ENCODE measurements at regions of chr12 and their contacts with region 1.

Region 1: DNA sequence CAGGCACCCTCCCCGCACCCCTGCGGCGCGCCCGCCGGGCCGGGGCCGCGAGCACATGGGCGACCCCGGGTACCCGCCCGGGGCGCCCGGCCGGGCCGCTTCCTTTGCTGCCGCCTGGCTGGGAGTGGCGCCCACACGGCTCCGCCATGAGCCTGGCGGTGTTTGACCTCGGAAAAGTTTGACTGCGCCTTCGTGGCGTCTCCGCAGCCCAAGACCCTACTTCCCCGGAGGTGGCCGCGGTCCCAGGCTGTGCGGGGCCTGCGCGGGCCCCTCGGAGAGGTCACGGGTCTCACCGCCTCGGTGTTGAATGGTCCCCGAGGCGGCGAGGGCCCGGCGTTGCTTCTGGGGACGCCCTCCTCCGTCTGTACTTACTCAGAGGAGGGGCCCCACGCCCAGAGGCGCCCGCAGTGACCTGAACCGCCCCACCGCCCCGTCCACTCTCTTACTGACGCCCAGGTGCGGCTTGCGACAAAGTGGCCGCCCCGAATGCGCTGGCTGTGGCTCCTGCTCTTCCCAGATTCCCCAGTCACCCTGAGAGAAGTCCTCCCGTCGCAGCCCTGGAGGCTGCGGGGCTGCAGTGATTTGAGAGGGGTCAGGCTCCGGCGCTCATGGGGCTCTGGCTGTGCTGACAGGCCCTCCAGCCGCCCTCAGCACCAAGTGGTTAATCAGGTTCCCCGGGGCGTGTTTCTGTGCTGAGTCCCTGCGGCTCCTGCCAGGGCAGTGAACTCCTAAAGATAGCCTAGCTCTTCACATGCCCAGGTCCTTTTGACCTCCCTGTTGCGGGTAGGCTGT is 5.8 kb downstream of the KMT5A start:
- DNase-seq: peak; percentile 65 to 83
- ATAC-seq: peak; percentile 59
- H3K4me3 ChIP-seq: peak overlapping the region; percentile 96 to 97
- H3K27ac ChIP-seq: peak overlapping the region; percentile 49 to 94
- H3K4me1 ChIP-seq: no peaks in the 10 kb centered on the region
- H3K27me3 ChIP-seq: no peaks in the 10 kb centered on the region

Region 2: DNA sequence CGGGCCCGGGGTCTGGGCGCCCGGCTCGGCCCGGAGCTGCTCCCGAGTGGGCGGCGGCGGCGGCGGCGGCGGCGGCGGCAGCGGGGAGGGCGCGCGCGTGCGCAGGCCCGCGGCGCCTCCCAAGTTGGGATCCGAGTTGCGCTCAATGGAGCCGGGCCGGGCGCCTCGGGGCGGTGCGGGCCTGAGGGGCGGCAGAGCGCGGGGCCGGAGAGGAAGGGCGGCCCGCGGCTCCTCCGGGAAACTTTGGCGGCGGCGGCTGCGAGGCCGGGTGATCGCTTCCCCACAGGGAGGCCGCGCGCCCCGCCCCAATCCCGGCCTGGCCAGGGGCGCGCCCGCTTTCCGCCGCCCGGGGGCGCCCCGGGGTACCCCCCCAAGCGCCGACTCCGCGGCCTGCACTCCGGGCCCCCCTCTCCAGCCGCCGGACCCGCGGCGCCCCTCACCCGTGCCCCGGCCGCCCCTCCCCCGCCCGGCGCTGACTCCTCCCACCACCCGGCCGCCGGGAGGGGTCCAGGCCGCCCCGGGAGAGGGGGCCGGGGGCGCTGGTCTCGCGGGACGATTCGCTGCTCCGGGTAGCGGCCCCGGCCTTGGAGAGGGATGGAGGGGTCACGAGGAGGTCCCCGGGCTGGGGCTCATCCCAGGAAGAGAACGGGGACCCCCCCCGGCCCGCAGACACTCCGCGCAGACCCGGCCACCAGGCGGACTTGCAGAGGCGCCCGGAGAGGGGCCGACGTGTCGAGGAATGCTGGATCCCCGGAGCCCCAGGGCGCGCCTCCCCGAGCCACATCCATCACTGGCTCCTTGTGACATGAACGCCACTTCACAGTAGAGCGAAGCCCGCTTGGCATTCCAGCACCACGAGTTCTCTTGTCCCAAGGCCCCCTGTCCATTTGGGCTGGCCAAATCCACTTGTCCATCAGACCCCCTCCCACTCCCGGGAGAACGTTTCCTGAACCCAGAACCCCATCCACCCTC is 144.2 kb after region 1 on chr12 and contains the start of gene RILPL1:
- intact Hi-C with region 1: loop called in 1 of 2 experiments (anchors 5 kb)
- DNase-seq: peak; percentile 71 to 85
- ATAC-seq: peak; percentile 73
- H3K4me3 ChIP-seq: peak within 1 kb of the TSS; percentile 85 to 91
- H3K27ac ChIP-seq: peak within 1 kb of the TSS; percentile 89 to 90
- H3K4me1 ChIP-seq: peaks cover 4 to 5% of the 10 kb centered on the region in 2 donors
- H3K27me3 ChIP-seq: no peaks in the 10 kb centered on the region
- total RNA-seq, gene RILPL1: 28.8 to 33.3 TPM